CD14-positive monocyte (primary cell): ENCODE measurements at regions of chr11 and their contacts with region 1.

Region 1: GRCh38 chr11:90601261-90601660 is 378.4 kb upstream of the CHORDC1 start:
- DNase-seq: no peak
- H3K4me3 ChIP-seq: no peak overlapping the region
- H3K4me3 Mint-ChIP-seq: no peak overlapping the region
- H3K27ac ChIP-seq: no peak overlapping the region
- H3K27ac Mint-ChIP-seq: no peak overlapping the region
- H3K4me1 ChIP-seq: no peaks in the 10 kb centered on the region
- H3K4me1 Mint-ChIP-seq: no peaks in the 10 kb centered on the region
- H3K27me3 ChIP-seq: no peaks in the 10 kb centered on the region
- H3K27me3 Mint-ChIP-seq: no peaks in the 10 kb centered on the region
- CTCF ChIP-seq: no peak

Region 2: GRCh38 chr11:90542092-90542491 is 59.2 kb before region 1 on chr11:
- intact Hi-C with region 1: loop called in 1 of 2 experiments (anchors 10 kb)
- DNase-seq: no peak
- H3K4me3 ChIP-seq: no peak overlapping the region
- H3K4me3 Mint-ChIP-seq: no peak overlapping the region
- H3K27ac ChIP-seq: no peak overlapping the region
- H3K27ac Mint-ChIP-seq: no peak overlapping the region
- H3K4me1 ChIP-seq: no peaks in the 10 kb centered on the region
- H3K4me1 Mint-ChIP-seq: no peaks in the 10 kb centered on the region
- H3K27me3 ChIP-seq: no peaks in the 10 kb centered on the region
- H3K27me3 Mint-ChIP-seq: no peaks in the 10 kb centered on the region
- CTCF ChIP-seq: no peak